B cell (primary cell): ENCODE measurements at regions of chr13 and their contacts with region 1.

Region 1: DNA sequence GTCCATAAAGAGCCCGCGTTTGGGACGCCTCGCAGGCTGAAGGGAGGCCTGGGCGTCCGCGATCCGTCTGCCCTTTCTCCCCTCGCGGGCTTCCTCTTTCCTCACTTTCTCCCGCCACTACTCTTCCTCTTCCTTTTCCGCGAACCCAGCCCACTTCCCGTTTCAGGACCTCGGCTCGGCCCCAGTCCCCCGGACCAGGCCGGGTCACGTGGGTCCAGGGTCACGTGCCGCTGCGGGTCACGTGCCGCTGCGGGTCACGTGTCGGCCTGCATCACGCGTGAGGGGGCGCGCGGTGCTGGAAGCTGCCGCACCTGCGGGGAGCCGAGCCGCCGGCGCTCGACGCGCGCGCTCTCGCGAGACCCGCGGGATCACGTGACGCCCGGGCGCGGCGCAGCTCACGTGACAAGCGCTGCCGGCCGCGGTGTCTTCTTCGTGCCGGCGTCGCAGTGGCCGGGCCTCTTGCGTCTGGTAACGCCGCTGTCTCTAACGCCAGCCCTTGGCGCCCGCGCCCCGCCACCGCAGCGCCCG is at the start of gene LAMP1:
- DNase-seq: peak; percentile 99
- ATAC-seq: peak; percentile 76
- H3K4me3 ChIP-seq: peak within 1 kb of the TSS; percentile 43 to 86 (median 78)
- H3K4me3 Mint-ChIP-seq: peak within 1 kb of the TSS; percentile 99
- H3K27ac ChIP-seq: peak within 1 kb of the TSS; percentile 81 to 93
- H3K27ac Mint-ChIP-seq: peak within 1 kb of the TSS; percentile 100
- H3K4me1 ChIP-seq: peaks cover 18 to 32% of the 10 kb centered on the region in 2 donors
- H3K4me1 Mint-ChIP-seq: peaks cover 42% of the 10 kb centered on the region
- H3K27me3 ChIP-seq: peaks cover 0 to 18% (median 4%) of the 10 kb centered on the region in 4 experiments
- H3K27me3 Mint-ChIP-seq: peaks cover 13% of the 10 kb centered on the region
- CTCF ChIP-seq: no peak
- total RNA-seq, gene LAMP1: 96.1 and 99.3 TPM in 2 replicates

Region 2: GRCh38 chr13:113153810-113154748 is 142.8 kb before region 1 on chr13:
- CTCF ChIA-PET with region 1: no interaction called
- POLR2A ChIA-PET with region 1: no interaction called
- intact Hi-C with region 1: loop called (anchors 5 kb)
- DNase-seq: peak; percentile 80
- ATAC-seq: peak; percentile 88
- H3K4me3 ChIP-seq: peak overlapping the region; percentile 40 to 77 (median 52)
- H3K4me3 Mint-ChIP-seq: peak overlapping the region; percentile 81
- H3K27ac ChIP-seq: peak overlapping the region; percentile 6 to 48
- H3K27ac Mint-ChIP-seq: peak overlapping the region; percentile 71
- H3K4me1 ChIP-seq: peaks cover 22 to 25% of the 10 kb centered on the region in 2 donors
- H3K4me1 Mint-ChIP-seq: peaks cover 19% of the 10 kb centered on the region
- H3K27me3 ChIP-seq: peaks cover 0 to 46% (median 11%) of the 10 kb centered on the region in 4 experiments
- H3K27me3 Mint-ChIP-seq: peaks cover 9% of the 10 kb centered on the region
- CTCF ChIP-seq: no peak

Region 3: DNA sequence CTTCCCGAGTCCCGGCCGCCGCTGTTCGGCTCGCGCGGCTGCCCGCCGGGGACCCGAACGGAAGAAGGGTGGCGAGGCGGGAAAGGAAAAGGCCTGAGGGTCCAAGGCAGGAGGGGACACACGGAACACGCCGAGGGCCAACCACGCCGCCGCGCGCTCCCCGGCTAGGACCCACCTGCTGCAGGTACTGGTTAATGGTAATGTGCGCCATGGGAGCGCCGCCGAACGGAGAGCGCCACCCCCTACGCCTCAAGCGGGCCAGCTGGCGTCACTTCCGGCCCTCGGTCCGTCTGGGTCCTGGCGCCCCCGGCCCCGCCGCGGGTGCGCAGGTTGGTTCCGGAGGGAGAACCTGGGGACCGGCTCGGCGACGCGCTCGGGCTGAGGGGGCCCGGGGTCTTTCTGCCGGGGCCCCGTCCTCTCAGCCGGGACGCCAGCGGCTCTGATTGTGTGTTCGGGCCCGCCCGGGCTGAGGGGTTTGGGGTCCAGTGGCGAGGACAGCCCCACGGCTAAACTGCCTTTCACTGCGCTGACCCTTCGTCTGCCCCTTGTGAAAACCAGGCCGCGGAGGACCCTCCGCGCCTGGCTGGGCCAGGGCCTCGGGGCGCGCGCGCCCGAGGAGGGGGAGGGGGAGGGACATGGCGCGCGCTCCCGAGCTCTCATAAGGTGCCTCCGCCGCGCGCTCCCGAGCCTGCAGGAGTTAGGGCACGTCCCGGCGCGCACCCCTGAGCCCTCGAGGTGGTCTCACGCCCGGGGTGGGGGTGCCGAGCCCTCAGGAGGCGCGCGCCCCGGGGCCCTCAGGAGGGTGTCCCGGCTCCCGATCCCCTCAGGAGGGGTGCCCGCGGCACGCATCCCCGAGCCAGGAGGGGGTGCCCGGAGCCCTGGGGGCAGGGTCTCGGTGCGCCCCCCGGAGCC is 88.2 kb before region 1 on chr13 and contains the start of gene PCID2:
- CTCF ChIA-PET with region 1: no interaction called
- POLR2A ChIA-PET with region 1: interaction called, 12 read pairs
- intact Hi-C with region 1: loop called (anchors 1 kb)
- DNase-seq: peak; percentile 95
- ATAC-seq: peak; percentile 69
- H3K4me3 ChIP-seq: peak within 1 kb of the TSS; percentile 68 to 88 (median 74)
- H3K4me3 Mint-ChIP-seq: peak within 1 kb of the TSS; percentile 88
- H3K27ac ChIP-seq: peak within 1 kb of the TSS; percentile 95 to 97
- H3K27ac Mint-ChIP-seq: peak within 1 kb of the TSS; percentile 91
- H3K4me1 ChIP-seq: peaks cover 15 to 24% of the 10 kb centered on the region in 2 donors
- H3K4me1 Mint-ChIP-seq: peaks cover 53% of the 10 kb centered on the region
- H3K27me3 ChIP-seq: no peaks in the 10 kb centered on the region
- H3K27me3 Mint-ChIP-seq: no peaks in the 10 kb centered on the region
- CTCF ChIP-seq: no peak
- total RNA-seq, gene PCID2: 54.1 and 61.1 TPM in 2 replicates

Region 4: DNA sequence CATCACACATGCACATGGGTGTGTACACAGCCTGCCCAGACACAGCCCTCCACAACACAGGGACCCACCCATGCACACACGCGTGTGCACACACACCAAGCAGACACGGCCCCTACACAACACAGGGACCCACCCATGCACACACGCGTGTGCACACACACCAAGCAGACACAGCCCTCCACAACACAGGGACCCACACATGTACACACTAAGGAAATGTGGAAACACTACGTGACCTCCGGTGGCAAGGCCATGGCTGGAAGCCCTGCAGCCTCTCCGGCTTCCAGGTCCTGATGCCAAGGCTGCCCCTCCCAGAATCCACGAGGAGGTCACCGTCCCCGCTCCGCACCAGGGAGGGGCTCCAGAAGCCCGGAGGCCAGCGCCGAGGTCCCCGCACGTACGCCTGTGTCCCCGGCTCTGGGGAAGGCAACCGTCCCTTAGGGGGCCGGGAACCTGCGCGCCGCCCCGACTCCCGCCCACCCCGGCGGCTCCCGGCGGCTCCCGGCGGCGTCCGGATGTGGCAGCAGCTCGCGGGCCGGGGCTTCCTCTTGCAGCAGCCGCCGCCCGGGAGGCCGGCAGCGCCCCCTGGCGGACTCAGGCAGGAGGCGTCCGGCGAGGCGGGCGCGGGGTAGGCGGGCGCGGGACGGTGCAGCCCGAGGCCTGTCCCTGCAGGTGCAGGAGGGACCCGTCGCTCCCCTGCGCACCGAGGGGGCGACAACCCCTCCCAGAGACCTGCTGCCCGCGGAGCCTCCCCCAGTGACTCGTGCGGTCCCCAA is 96.8 kb after region 1 on chr13:
- CTCF ChIA-PET with region 1: no interaction called
- POLR2A ChIA-PET with region 1: no interaction called
- intact Hi-C with region 1: loop called (anchors 5 kb)
- DNase-seq: peak; percentile 85
- ATAC-seq: peak; percentile 96
- H3K4me3 ChIP-seq: peak overlapping the region; percentile 56 to 78 (median 59)
- H3K4me3 Mint-ChIP-seq: peak overlapping the region; percentile 94
- H3K27ac ChIP-seq: peak overlapping the region in 1 of 2 donors; percentile 41
- H3K27ac Mint-ChIP-seq: peak overlapping the region; percentile 67
- H3K4me1 ChIP-seq: peaks cover 8 to 12% of the 10 kb centered on the region in 2 donors
- H3K4me1 Mint-ChIP-seq: peaks cover 4% of the 10 kb centered on the region
- H3K27me3 ChIP-seq: no peaks in the 10 kb centered on the region
- H3K27me3 Mint-ChIP-seq: no peaks in the 10 kb centered on the region
- CTCF ChIP-seq: peak; percentile 84

Region 5: GRCh38 chr13:113448885-113449692 is 152.2 kb after region 1 on chr13:
- CTCF ChIA-PET with region 1: interaction called, 3 read pairs
- POLR2A ChIA-PET with region 1: no interaction called
- intact Hi-C with region 1: loop called (anchors 5 kb)
- DNase-seq: peak; percentile 54
- ATAC-seq: no peak
- H3K4me3 ChIP-seq: peak overlapping the region in 1 of 5 experiments; percentile 35
- H3K4me3 Mint-ChIP-seq: peak overlapping the region; percentile 16
- H3K27ac ChIP-seq: peak overlapping the region in 1 of 2 donors; percentile 18
- H3K27ac Mint-ChIP-seq: peak overlapping the region; percentile 32
- H3K4me1 ChIP-seq: peaks cover 11 to 27% of the 10 kb centered on the region in 2 donors
- H3K4me1 Mint-ChIP-seq: peaks cover 33% of the 10 kb centered on the region
- H3K27me3 ChIP-seq: peaks cover 0 to 3% (median 0%) of the 10 kb centered on the region in 4 experiments
- H3K27me3 Mint-ChIP-seq: no peaks in the 10 kb centered on the region
- CTCF ChIP-seq: no peak